ENCODE measurements at regions of chr20 and their contacts with region 1.

Region 1: DNA sequence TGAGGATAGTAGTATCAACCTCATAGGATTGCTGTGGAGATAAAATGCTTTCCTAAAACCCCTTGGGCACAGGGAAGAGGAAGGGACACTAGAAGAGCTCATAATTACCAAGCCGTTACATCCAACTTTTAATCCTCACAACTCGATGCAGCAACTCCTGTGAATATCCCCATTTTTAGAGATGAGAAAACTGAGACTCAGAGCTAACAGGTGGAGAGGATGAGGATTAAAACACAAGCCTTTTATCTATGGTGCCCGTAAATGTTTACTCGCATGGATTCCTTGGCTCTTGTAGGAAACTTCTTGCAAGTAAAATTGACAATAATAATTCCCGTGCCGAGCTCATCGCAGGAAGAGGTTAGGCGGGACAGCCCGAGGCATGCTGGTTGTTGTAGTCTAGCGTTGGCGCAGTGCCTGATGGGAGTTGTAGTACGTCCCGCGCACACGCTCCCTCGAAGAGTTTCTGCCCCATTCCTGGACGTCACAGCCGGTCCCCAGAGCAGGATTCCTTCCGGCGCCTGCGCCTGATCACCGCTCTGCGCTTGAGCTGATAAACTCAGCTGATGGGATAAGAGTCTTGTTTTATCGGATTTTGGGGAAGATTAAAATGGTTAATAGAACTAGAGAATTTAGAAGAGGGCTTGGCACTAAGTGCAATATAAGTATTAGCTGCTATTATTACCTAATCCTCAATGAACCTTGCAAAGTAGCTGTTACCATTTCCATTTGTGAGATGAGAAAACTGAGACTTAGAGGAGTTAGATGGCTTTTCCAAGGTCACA is 2.8 kb upstream of the UBE2V1 start:
- DNase-seq: peak; percentile 80
- ATAC-seq: peak; percentile 76
- H3K4me3 Mint-ChIP-seq: peak overlapping the region; percentile 89
- H3K27ac Mint-ChIP-seq: peak overlapping the region; percentile 73
- H3K4me1 Mint-ChIP-seq: peaks cover 52% of the 10 kb centered on the region
- H3K27me3 Mint-ChIP-seq: no peaks in the 10 kb centered on the region
- CTCF ChIP-seq: no peak

Region 2: DNA sequence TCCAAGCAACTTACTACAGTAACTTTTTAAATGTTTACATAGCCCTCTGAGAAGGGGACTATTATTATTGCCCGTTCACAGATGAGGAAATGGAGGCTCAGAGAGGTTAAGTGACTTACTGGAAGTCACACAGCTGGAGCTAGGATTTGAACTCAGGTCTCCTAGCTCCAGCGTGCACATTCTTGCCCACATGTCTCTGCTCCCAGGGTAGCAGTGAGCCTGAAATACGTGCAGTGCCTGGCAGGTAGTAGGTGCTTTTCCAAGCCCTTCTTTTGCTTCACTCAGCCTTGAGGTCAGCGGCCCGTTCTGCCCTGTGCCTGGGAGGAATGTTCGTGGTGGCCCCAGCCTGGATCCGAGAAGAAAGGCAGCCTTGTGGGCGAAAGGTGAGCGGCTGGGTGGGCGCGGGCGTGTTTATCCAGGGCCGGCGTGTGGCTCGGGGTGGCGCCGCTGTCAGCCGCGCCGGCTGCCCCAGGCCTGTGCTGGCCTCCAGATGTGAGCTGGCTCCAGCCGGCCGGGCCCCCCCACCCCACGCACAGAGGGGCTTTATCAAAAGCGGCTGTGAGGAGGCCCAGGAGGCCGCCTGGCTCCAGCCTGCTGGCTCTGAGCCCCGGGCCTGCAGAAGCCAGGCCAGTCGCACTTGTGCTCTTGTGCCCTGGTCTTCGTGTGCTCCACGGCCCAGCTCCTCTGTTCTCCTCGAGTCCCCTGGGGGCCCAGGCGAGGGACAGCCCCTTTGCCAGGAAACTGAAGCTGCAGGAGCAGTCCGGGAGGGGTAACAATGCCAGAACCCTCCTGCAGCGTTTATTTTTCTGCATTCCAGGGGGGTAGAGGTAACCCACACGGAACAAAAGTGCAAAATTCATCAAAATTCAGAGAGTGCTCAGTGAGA is 60.9 kb before region 1 on chr20:
- CTCF ChIA-PET with region 1: no interaction called
- POLR2A ChIA-PET with region 1: no interaction called
- intact Hi-C with region 1: no loop called
- DNase-seq: no peak
- ATAC-seq: no peak
- H3K4me3 Mint-ChIP-seq: no peak overlapping the region
- H3K27ac Mint-ChIP-seq: no peak overlapping the region
- H3K4me1 Mint-ChIP-seq: peaks cover 8% of the 10 kb centered on the region
- H3K27me3 Mint-ChIP-seq: no peaks in the 10 kb centered on the region
- CTCF ChIP-seq: no peak

Region 3: DNA sequence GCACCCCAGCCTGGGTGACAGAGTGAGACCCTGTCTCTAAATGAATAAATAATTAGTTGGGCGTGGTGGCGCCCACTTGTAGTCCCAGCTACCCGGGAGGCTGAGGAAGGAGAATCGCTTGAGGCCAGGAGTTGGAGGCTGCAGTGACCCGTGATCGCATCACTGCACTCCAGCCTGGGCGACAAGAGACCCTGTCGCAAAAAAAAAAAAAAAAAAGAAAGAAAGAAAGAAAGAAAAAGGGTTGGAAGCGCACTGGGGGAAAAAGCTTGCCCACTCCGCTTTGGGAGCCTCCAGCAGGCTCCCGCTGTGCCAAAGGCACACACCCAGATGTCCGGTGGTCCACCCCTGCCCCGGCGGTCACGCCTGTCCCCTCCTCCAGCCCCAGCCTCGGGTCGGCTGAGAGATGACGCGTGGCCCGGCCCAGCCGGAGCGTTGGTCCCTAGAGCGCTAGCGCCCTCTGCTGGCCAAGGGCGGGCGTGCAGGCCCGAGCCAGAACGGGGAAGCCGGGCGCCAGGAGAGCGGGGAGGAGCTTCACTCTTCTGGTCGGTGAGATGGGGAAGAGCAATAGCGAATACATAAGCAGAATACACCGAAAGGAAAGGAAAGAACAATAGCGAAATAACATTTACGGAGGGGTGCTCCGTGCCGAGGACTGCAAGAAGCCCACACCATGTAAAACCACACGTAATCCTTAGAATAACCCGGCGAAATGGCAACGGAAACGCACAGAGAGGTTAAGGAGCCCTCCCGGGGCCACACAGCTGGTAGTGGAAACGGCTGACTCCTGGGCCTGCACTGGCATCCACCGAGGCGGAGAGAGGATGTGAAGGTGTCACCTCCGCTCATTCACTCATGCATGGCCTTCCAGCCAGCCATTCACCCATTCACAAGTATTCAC is 44.5 kb before region 1 on chr20:
- CTCF ChIA-PET with region 1: interaction called, 10 read pairs
- POLR2A ChIA-PET with region 1: interaction called, 3 read pairs
- intact Hi-C with region 1: no loop called
- DNase-seq: peak; percentile 98
- ATAC-seq: peak; percentile 100
- H3K4me3 Mint-ChIP-seq: peak overlapping the region; percentile 48
- H3K27ac Mint-ChIP-seq: no peak overlapping the region
- H3K4me1 Mint-ChIP-seq: peaks cover 4% of the 10 kb centered on the region
- H3K27me3 Mint-ChIP-seq: peaks cover 7% of the 10 kb centered on the region
- CTCF ChIP-seq: peak; percentile 79

Region 4: DNA sequence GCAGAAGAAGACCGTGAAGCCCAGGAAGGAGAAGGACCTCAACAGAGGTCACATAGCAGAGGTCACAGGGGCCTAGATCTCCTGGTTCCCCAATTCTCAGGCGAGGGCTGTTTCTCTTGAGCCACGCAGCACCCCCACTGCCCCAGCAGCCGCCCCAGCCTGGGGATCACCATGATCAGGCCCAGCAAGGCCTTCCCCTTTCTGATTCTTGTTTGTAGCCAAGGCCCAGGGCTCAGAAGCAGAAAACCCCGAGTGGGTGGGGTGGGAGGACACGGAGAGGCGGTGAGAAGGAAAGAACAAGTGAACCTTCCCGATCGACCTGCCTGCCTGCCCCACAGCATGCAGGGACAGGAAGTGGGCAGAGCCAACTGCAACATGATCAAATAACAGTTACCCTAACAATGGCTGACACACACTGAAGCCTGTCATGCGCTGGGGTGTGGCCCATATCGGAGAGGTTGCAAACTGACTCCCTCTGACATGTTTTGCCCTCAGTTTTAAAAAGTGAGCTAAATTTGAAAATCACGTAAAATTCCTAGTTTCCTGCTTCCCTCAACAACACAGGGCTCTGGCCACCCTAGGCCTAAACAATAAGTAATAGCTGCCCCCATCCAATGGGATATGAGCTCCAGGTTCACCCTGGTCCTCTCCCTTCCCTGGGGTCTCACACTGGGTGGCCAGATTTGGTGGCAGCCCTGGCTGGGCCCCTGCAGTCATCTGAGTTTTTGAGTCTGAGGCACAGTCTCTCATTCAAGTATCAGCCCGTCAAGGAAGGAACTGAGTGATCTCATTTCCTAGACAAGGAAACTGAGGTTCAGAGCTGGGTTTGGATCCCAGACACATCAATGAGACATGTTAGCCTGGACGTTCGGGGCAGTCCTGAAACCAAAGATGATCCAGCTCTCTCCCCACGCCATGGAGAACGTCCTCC is 31.2 kb after region 1 on chr20:
- CTCF ChIA-PET with region 1: interaction called, 4 read pairs
- POLR2A ChIA-PET with region 1: no interaction called
- intact Hi-C with region 1: loop called (anchors 1 kb)
- DNase-seq: peak; percentile 61
- ATAC-seq: peak; percentile 94
- H3K4me3 Mint-ChIP-seq: peak overlapping the region; percentile 60
- H3K27ac Mint-ChIP-seq: peak overlapping the region; percentile 90
- H3K4me1 Mint-ChIP-seq: peaks cover 48% of the 10 kb centered on the region
- H3K27me3 Mint-ChIP-seq: no peaks in the 10 kb centered on the region
- CTCF ChIP-seq: no peak

Region 5: DNA sequence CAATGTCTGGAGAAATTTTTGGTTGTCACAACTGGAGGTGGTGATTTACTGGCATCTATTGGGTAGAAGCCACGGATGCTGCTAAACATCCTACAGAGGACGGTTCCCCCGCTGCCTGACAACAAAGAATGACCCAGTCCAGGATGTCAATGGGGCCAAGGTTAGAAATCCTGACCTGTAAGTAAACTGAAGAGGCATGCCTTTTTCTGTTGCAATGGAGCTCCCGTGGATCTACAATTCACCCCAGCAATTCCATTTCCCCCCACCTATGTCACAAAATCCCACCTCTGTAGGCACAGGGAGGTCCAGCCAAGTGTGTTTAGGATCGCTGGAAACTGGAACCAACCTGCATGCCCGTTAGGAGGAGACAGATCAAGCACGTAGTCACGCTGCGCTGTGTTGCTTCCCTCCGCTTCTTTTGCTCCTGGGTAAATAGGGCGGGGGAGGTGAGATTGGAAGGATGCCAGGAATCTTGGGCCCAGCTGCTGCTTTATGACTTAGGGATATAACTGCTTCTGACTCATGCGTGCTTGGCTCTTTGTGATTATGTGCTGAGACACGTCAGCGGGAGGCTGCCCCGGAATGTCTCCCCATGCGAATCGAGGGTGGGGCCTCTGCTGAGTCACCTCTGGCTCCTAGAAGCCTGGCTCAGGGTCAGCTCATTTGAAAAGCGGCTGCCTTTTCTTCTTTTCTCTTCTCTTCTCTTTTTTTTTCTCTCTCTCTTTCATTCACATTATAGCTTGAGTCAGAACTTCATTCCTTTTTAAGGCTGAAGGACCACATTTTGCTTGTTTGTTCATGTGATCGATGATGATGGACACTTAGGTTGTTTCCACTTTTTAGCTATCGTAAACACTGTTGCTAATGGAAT is 50.1 kb after region 1 on chr20:
- CTCF ChIA-PET with region 1: interaction called, 134 read pairs
- POLR2A ChIA-PET with region 1: interaction called, 10 read pairs
- intact Hi-C with region 1: loop called (anchors 1 kb)
- DNase-seq: peak; percentile 66
- ATAC-seq: peak; percentile 99
- H3K4me3 Mint-ChIP-seq: peak overlapping the region; percentile 68
- H3K27ac Mint-ChIP-seq: peak overlapping the region; percentile 61
- H3K4me1 Mint-ChIP-seq: peaks cover 14% of the 10 kb centered on the region
- H3K27me3 Mint-ChIP-seq: peaks cover 6% of the 10 kb centered on the region
- CTCF ChIP-seq: no peak

Region 6: DNA sequence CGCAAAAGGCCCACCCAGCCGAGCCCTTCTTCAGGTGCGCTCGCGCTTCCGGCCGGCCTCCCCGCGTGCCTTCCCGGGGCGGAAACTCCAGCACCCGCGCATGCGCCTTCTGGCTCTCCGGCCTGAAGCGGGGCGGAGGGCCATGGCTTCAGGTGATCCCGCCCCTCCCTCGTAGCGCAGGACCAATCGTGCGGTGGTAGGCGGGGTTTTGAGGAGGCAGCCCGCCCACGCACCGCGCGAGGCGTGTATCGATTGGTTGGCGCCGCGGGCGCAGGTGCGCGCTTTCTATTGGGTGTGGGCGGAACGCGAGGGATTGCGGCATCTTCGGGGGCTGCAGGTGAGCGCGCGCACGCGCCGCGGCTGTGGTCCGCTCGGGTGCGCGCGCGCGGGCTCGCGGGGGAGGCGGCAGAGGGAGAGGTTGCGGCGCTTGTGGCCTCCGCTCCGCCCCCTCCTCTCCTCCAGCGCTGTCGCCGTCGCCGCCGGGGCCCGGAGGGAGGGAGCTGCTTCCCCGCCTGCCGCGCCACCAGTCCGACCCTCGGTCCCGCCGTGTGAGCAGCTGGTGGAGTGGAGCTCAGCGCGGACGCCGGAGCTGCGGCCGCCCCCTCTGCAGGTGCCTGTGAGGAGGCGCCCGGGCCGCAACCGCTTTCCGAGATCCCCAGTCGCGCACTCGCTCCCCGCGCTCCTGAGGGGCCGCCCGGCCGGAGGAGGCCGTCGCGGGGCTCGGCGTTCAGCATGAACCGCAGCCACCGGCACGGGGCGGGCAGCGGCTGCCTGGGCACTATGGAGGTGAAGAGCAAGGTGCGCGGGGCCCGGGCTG is 615.5 kb after region 1 on chr20 and contains the start of gene PARD6B:
- CTCF ChIA-PET with region 1: no interaction called
- POLR2A ChIA-PET with region 1: no interaction called
- intact Hi-C with region 1: loop called (anchors 1 kb)
- DNase-seq: peak; percentile 98
- ATAC-seq: peak; percentile 94
- H3K4me3 Mint-ChIP-seq: peak within 1 kb of the TSS; percentile 89
- H3K27ac Mint-ChIP-seq: peak within 1 kb of the TSS; percentile 71
- H3K4me1 Mint-ChIP-seq: peaks cover 16% of the 10 kb centered on the region
- H3K27me3 Mint-ChIP-seq: peaks cover 2% of the 10 kb centered on the region
- CTCF ChIP-seq: no peak
- total RNA-seq, gene PARD6B: 3.8 and 5.7 TPM in 2 replicates